Activated CD4-positive, alpha-beta memory T cell treated with anti-CD3 and anti-CD28 coated beads, Interleukin-2, amount 10 ng/mL, durations not matched to agents 7 days and 5 days (primary cell): ENCODE measurements at regions of chr14 and their contacts with region 1.

Region 1: DNA sequence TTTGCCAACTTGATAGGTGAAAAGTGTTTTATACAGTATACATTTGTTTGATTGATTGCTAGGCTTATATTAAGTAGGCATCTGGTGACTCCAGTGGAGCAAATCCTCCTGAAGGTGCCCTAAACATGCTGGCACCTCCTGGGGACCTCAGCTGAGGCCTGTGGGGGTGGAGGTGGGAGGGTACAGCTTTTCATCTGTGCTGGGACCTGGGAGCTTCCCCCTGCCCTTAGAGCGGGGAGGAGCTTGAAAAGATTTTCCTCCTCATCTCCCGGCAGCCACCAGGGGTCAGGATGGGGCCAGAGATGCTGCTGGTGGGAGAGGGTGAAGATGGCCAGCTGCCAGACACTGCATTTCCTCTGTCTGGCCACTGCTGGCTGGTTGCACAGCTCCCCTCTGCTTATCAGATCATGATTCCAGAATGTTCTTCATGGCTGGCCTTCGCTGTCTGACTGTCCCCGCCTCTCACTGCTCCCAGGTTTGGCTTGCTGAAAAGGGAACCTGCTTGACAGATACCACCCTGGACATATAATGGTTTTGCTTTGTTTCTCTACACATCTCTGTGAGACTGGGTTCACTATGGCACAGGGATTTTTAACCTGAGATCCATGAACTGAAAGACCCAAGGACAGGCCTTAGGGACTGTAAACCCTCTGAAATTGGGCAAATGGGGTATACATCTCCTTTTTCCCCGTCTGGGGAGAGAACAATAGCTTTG is 10.5 kb upstream of the JPH4 start:
- DNase-seq: peak; percentile 81
- H3K4me3 Mint-ChIP-seq: no peak overlapping the region
- H3K27ac Mint-ChIP-seq: no peak overlapping the region
- H3K4me1 Mint-ChIP-seq: peaks cover 2% of the 10 kb centered on the region
- H3K27me3 Mint-ChIP-seq: peaks cover 14% of the 10 kb centered on the region

Region 2: GRCh38 chr14:23578560-23579310 is 10.3 kb before region 1 on chr14 and contains the start of gene JPH4:
- CTCF ChIA-PET with region 1: no interaction called
- POLR2A ChIA-PET with region 1: no interaction called
- DNase-seq: no peak
- H3K4me3 Mint-ChIP-seq: no peak within 1 kb of the TSS
- H3K27ac Mint-ChIP-seq: no peak within 1 kb of the TSS
- H3K4me1 Mint-ChIP-seq: peaks cover 12% of the 10 kb centered on the region
- H3K27me3 Mint-ChIP-seq: peaks cover 43% of the 10 kb centered on the region
- total RNA-seq, gene JPH4: not detected

Region 3: DNA sequence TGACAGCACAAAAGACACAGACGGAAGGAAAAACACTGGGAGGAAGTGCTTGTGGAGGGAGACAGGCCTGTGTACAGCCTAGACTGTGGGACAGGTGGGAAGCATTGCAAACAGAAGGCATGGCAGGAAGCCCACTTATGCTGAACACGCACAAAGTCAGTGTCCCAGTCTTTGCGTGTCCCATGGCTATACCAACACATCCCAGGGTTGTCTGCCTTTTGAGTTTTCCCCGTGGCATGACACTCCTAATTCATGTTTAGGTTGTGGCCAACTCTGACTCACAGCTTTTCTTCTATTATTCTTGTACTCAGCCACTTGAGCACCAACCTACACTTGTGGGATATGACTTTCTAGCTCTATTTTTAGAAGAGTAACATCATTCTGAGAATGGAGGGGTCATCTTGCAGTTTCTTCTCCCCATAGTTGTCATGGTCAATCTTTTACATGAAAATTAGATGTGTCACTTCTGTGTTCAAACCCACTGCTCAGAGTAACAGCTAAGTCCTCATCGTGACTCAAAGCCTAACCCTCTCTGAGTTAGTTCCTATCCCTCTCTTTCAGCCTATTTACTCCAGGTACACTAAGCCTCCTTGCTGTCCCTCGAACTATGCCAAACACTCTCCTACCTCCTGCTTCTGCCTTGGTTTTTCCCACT is 17.0 kb after region 1 on chr14:
- CTCF ChIA-PET with region 1: interaction called, 17 read pairs
- POLR2A ChIA-PET with region 1: interaction called, 3 read pairs
- DNase-seq: no peak
- H3K4me3 Mint-ChIP-seq: no peak overlapping the region
- H3K27ac Mint-ChIP-seq: peak overlapping the region; percentile 76
- H3K4me1 Mint-ChIP-seq: peaks cover 40% of the 10 kb centered on the region
- H3K27me3 Mint-ChIP-seq: no peaks in the 10 kb centered on the region

Region 4: GRCh38 chr14:23641915-23642588 is 53.0 kb after region 1 on chr14:
- CTCF ChIA-PET with region 1: no interaction called
- POLR2A ChIA-PET with region 1: no interaction called
- DNase-seq: no peak
- H3K4me3 Mint-ChIP-seq: no peak overlapping the region
- H3K27ac Mint-ChIP-seq: no peak overlapping the region
- H3K4me1 Mint-ChIP-seq: peaks cover 15% of the 10 kb centered on the region
- H3K27me3 Mint-ChIP-seq: no peaks in the 10 kb centered on the region

Region 5: DNA sequence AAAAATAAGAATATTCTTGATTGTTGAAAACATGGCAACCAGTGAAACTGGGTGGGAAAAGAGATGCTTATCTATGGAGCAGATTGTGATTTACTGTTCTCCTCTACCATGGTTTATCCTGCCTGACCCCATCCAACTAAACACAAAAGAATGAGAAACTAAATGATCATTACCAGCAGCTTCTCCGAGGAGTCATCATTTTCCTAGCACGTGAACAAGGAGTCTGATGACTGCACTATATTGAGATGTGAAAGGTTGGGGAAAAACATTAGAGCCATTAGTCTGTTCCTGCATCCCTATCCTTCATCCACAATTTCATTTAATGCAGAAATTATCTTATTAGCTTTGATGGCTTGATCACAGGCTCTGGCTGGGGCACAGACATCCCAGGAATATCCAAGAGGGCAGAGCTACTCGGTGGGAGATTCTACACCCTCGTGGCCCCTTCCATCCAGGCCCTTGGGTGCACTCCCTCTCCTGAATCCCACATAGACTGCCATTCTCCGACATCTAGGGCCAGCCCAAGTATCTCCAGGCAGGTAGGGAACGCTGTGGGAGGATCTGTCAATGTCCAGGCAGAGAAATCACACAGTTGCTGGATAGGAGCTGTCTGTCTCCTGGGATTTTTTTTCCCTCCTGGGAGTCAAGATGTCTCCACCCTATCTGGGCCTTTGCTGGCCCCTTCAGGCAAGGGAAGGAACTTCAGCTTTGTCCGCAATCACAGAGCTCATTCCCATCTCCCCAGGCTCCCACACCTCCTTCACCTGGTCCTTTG is 321.2 kb after region 1 on chr14:
- CTCF ChIA-PET with region 1: interaction called, 16 read pairs
- POLR2A ChIA-PET with region 1: no interaction called
- DNase-seq: no peak
- H3K4me3 Mint-ChIP-seq: no peak overlapping the region
- H3K27ac Mint-ChIP-seq: no peak overlapping the region
- H3K4me1 Mint-ChIP-seq: no peaks in the 10 kb centered on the region
- H3K27me3 Mint-ChIP-seq: peaks cover 20% of the 10 kb centered on the region

Region 6: GRCh38 chr14:23929822-23930294 is 340.8 kb after region 1 on chr14:
- CTCF ChIA-PET with region 1: interaction called, 16 read pairs
- POLR2A ChIA-PET with region 1: no interaction called
- DNase-seq: peak; percentile 81
- H3K4me3 Mint-ChIP-seq: no peak overlapping the region
- H3K27ac Mint-ChIP-seq: no peak overlapping the region
- H3K4me1 Mint-ChIP-seq: no peaks in the 10 kb centered on the region
- H3K27me3 Mint-ChIP-seq: peaks cover 7% of the 10 kb centered on the region